WTC11 (cell line): ENCODE measurements at regions of chr2 and their contacts with region 1.

Region 1: GRCh38 chr2:80499095-80499494 is 194.5 kb upstream of the LRRTM1 start:
- DNase-seq: peak; percentile 17
- ATAC-seq: no peak
- H3K4me3 Mint-ChIP-seq: no peak overlapping the region
- H3K27ac Mint-ChIP-seq: no peak overlapping the region
- H3K4me1 Mint-ChIP-seq: peaks cover 3% of the 10 kb centered on the region; the same call in 1 of the 2 replicates
- H3K27me3 Mint-ChIP-seq: no peaks in the 10 kb centered on the region
- CTCF ChIP-seq: no peak

Region 2: DNA sequence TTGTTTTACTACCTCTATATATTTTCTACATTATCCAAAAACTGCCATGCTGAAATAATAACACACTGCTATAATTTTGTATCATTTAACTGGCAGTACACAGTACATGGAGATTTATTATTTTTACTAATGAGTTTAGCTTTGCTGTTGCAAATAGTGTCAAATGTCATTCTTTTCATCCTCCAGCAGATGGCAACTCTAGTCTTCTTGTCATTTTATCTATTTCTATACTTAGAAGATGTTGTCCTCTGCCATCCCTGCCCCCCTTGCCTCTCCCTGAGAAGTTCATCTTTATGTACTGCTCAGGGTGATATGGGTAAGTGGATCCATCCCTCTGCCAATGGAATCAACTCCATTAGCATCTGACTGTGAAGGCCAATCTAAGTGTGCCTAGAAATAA is 172.9 kb before region 1 on chr2:
- CTCF ChIA-PET with region 1: interaction called, 31 read pairs
- POLR2A ChIA-PET with region 1: interaction called, 8 read pairs
- DNase-seq: no peak
- ATAC-seq: peak; percentile 17; the same call in 1 of the 2 replicates
- H3K4me3 Mint-ChIP-seq: no peak overlapping the region
- H3K27ac Mint-ChIP-seq: no peak overlapping the region
- H3K4me1 Mint-ChIP-seq: peaks cover 25% of the 10 kb centered on the region
- H3K27me3 Mint-ChIP-seq: peaks cover 14% of the 10 kb centered on the region
- CTCF ChIP-seq: 0 out of 2 replicates have a peak, but pooled peaks have one; percentile 24